WTC11 (cell line): ENCODE measurements at regions of chr19 and their contacts with region 1.

Region 1: DNA sequence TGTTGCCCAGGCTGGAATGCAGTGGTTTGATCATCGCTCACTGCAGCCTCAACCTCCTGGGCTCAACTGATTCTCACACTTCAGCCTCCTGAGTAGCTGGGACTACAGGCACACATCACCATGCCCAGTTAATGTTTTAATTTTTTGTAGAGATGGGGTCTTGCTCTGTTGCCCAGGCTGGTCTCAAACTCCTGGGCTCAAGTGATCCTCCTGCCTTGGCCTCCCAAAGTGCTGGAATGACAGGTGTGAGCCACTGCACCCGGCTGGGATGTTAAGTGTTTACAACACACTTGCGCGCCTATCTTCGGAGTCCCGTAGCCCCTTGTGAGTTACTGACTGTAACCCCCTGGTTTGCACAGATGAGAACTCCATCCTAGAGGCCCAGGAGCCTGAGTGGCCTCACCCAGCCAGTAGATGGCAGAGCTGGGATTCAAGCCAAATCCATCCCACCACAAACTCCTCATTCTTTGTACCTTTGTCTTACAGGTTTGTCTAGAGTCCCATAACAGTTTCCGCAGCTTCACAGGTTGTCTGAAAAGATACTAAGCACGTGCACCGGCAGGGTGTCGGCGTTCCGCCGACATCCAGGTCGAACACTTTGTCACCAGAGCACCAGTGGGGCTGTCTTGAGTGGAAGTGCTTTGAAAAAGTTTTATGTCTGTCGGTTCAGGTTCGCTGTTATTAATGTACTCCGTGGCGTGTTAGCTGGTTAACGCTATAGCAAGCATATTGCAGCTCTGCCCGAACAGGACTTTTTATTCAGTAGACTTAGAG is 14.7 kb downstream of the MAG start:
- DNase-seq: peak; percentile 52
- ATAC-seq: peak; percentile 87
- H3K4me3 Mint-ChIP-seq: no peak overlapping the region
- H3K27ac Mint-ChIP-seq: no peak overlapping the region
- H3K4me1 Mint-ChIP-seq: no peaks in the 10 kb centered on the region
- H3K27me3 Mint-ChIP-seq: no peaks in the 10 kb centered on the region; the same call in 1 of the 2 replicates
- CTCF ChIP-seq: peak; percentile 37; the same call in 1 of the 2 replicates

Region 2: DNA sequence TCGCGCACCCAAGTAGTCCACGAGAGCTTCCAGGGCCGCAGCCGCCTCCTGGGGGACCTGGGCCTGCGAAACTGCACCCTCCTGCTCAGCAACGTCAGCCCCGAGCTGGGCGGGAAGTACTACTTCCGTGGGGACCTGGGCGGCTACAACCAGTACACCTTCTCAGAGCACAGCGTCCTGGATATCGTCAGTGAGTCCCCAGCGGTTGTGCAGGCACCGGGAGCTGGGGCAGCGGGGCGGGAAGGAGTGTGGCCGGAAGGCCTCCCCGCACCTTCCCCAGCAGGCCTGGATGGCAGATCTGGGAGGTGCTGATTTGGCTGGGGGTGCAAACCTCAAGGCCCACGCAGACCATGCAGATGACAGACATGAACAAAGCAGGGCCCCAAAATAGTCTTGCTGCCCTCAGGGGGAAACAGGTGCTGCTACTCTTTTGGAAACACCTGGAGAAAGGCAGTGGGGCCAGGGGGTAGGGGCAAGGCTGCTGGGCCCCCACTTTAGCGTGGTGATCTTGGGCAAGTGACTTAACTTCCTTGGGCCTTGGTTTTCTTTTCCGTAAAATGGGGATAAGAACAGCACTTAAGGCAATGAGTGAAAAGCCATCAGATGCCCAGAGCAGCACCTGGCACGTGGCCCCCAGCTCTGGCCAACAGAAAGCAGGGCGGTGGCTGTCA is 10.7 kb before region 1 on chr19:
- CTCF ChIA-PET with region 1: interaction called, 12 read pairs
- POLR2A ChIA-PET with region 1: no interaction called
- DNase-seq: peak; percentile 48
- ATAC-seq: peak; percentile 52
- H3K4me3 Mint-ChIP-seq: no peak overlapping the region
- H3K27ac Mint-ChIP-seq: no peak overlapping the region
- H3K4me1 Mint-ChIP-seq: peaks cover 11% of the 10 kb centered on the region
- H3K27me3 Mint-ChIP-seq: no peaks in the 10 kb centered on the region; the same call in 1 of the 2 replicates
- CTCF ChIP-seq: no peak